AG04450 (cell line): ENCODE measurements at regions of chr16 and their contacts with region 1.

Region 1: GRCh38 chr16:71537643-71538042 is 11.4 kb downstream of the CHST4 start:
- DNase-seq: peak; percentile 8
- H3K4me3 ChIP-seq: no peak overlapping the region
- H3K27ac ChIP-seq: no peak overlapping the region
- H3K27me3 ChIP-seq: no peaks in the 10 kb centered on the region
- CTCF ChIP-seq: peak; percentile 65

Region 2: GRCh38 chr16:71412270-71413160 is 125.1 kb before region 1 on chr16:
- CTCF ChIA-PET with region 1: interaction called, 18 read pairs
- POLR2A ChIA-PET with region 1: no interaction called
- DNase-seq: peak; percentile 34
- H3K4me3 ChIP-seq: no peak overlapping the region
- H3K27ac ChIP-seq: no peak overlapping the region
- H3K27me3 ChIP-seq: peaks cover 21% of the 10 kb centered on the region
- CTCF ChIP-seq: peak; percentile 83